Activated CD8-positive, alpha-beta T cell treated with anti-CD3 and anti-CD28 coated beads, Interleukin-2, amount 10 ng/mL, durations not matched to agents 7 days and 5 days (primary cell): ENCODE measurements at regions of chr19 and their contacts with region 1.

Region 1: GRCh38 chr19:5967994-5968430 is 9.9 kb downstream of the RANBP3 start:
- DNase-seq: peak; percentile 77
- ATAC-seq: peak; percentile 66
- H3K4me3 Mint-ChIP-seq: no peak overlapping the region
- H3K27ac Mint-ChIP-seq: peak overlapping the region; percentile 60
- H3K4me1 Mint-ChIP-seq: peaks cover 80% of the 10 kb centered on the region
- H3K27me3 Mint-ChIP-seq: no peaks in the 10 kb centered on the region

Region 2: DNA sequence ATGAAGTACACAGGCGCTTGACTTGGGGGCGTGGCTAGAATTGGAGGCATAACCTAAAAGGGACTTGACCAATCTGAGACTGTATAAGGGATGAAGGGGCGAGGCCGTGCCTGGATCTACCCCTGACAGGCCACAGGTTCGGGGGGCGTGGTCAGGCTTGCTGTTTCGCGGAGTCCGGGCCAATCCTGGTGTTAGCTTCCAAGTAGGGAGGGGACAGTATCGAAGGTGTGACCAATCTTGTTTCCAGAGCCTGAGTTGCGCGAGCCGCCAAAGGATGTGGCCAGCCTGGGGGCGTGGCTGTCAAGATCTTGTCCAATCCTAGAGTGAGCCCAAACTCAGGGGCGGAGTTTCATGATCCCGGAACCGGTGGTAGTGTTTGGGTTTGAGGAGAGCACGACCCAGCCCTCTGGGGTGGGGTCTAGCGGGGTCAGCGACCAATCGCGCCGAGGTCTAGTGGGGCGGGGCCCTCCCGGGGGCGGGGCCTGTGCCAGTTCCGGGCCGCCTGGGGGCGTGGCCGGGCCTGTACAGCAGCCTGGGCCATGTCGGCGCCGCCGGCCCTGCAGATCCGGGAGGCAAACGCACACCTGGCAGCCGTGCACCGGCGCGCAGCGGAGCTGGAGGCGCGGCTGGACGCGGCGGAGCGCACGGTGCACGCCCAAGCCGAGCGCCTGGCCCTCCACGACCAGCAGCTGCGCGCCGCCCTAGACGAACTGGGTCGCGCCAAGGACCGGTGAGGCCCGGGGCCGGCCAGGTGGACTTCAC is 63.5 kb before region 1 on chr19 and contains the start of gene VMAC:
- CTCF ChIA-PET with region 1: interaction called, 15 read pairs
- POLR2A ChIA-PET with region 1: no interaction called
- DNase-seq: peak; percentile 100
- ATAC-seq: peak; percentile 87
- H3K4me3 Mint-ChIP-seq: peak within 1 kb of the TSS; percentile 89
- H3K27ac Mint-ChIP-seq: peak within 1 kb of the TSS; percentile 100
- H3K4me1 Mint-ChIP-seq: peaks cover 26% of the 10 kb centered on the region
- H3K27me3 Mint-ChIP-seq: no peaks in the 10 kb centered on the region
- total RNA-seq, gene VMAC: 6.2 to 6.8 TPM

Region 3: GRCh38 chr19:5932146-5932545 is 35.9 kb before region 1 on chr19:
- CTCF ChIA-PET with region 1: no interaction called
- POLR2A ChIA-PET with region 1: no interaction called
- DNase-seq: no peak
- ATAC-seq: no peak
- H3K4me3 Mint-ChIP-seq: no peak overlapping the region
- H3K27ac Mint-ChIP-seq: no peak overlapping the region
- H3K4me1 Mint-ChIP-seq: no peaks in the 10 kb centered on the region
- H3K27me3 Mint-ChIP-seq: no peaks in the 10 kb centered on the region

Region 4: GRCh38 chr19:5947435-5947834 is 20.6 kb before region 1 on chr19:
- CTCF ChIA-PET with region 1: interaction called, 75 read pairs
- POLR2A ChIA-PET with region 1: interaction called, 3 read pairs
- DNase-seq: no peak
- ATAC-seq: no peak
- H3K4me3 Mint-ChIP-seq: no peak overlapping the region
- H3K27ac Mint-ChIP-seq: peak overlapping the region; percentile 75
- H3K4me1 Mint-ChIP-seq: peaks cover 61% of the 10 kb centered on the region
- H3K27me3 Mint-ChIP-seq: no peaks in the 10 kb centered on the region

Region 5: DNA sequence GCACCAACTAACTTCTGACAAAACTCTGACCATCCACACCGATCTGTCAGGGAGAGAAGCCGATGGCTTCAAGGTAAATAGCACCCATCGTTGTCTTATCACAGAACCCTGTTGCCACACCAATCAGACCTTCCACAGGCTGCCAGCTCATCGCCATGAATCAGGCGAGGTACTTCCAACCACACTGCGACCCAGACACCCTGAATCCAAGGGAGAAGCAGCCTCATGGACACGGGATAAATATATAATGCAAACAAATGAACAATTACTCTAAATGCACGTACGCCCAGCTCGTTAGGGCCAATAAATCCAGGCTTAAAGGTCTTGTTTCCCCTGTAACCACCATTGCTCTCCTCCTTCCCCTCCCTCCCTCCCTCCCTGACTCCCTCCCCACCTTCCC is 10.8 kb before region 1 on chr19:
- CTCF ChIA-PET with region 1: interaction called, 75 read pairs
- POLR2A ChIA-PET with region 1: interaction called, 5 read pairs
- DNase-seq: no peak
- ATAC-seq: no peak
- H3K4me3 Mint-ChIP-seq: no peak overlapping the region
- H3K27ac Mint-ChIP-seq: no peak overlapping the region
- H3K4me1 Mint-ChIP-seq: peaks cover 87% of the 10 kb centered on the region
- H3K27me3 Mint-ChIP-seq: no peaks in the 10 kb centered on the region

Region 6: GRCh38 chr19:5987077-5987818 is 19.2 kb after region 1 on chr19:
- CTCF ChIA-PET with region 1: interaction called, 24 read pairs
- POLR2A ChIA-PET with region 1: no interaction called
- DNase-seq: peak; percentile 83
- ATAC-seq: peak; percentile 57
- H3K4me3 Mint-ChIP-seq: peak overlapping the region; percentile 67
- H3K27ac Mint-ChIP-seq: peak overlapping the region; percentile 66
- H3K4me1 Mint-ChIP-seq: peaks cover 48% of the 10 kb centered on the region
- H3K27me3 Mint-ChIP-seq: no peaks in the 10 kb centered on the region

Region 7: DNA sequence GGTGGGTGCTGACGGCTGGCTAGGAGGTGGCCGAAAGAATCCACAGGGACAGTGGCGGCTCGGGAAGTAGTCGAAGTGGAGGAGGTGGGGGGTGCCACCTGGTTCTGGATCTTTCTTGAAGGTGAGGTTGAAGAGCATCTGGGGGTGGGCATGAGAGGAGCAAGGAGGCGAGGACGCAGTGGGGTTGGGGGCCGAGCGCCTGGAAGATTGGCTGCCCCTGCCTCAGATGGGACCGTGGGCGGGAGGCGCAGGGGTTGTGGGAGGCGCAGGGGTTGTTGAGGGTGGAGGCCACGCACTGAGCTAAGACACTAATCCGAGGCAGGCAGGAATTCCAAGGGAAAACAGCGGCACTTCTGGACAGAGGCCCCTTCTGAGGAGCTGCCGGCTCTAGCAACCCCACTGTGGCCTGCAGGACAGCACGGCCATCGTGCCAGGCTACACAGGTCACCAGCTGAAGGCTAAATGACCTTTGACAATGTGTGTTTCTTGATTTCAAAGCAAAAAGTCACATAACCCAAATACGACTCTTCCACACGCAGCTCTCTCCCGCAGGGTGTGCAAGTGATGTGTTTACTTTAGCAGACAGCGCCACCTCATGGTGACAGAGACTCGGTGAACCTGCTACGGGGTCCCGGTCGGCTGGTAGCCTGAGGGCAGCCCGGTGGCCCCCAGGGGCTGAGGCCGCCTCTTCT is 54.0 kb after region 1 on chr19:
- CTCF ChIA-PET with region 1: interaction called, 38 read pairs
- POLR2A ChIA-PET with region 1: interaction called, 3 read pairs
- DNase-seq: peak; percentile 87
- ATAC-seq: peak; percentile 93
- H3K4me3 Mint-ChIP-seq: no peak overlapping the region
- H3K27ac Mint-ChIP-seq: no peak overlapping the region
- H3K4me1 Mint-ChIP-seq: peaks cover 14% of the 10 kb centered on the region
- H3K27me3 Mint-ChIP-seq: no peaks in the 10 kb centered on the region

Region 8: GRCh38 chr19:6098574-6098973 is 130.6 kb after region 1 on chr19:
- CTCF ChIA-PET with region 1: no interaction called
- POLR2A ChIA-PET with region 1: no interaction called
- DNase-seq: no peak
- ATAC-seq: no peak
- H3K4me3 Mint-ChIP-seq: no peak overlapping the region
- H3K27ac Mint-ChIP-seq: no peak overlapping the region
- H3K4me1 Mint-ChIP-seq: peaks cover 16% of the 10 kb centered on the region
- H3K27me3 Mint-ChIP-seq: no peaks in the 10 kb centered on the region